ENCODE measurements at regions of chr6 and their contacts with region 1.

Region 1: GRCh38 chr6:55276745-55277530 is 50.3 kb upstream of the GFRAL start:
- DNase-seq: peak; percentile 6 to 43 (median 10)
- ATAC-seq: no peak
- H3K4me3 ChIP-seq: no peak overlapping the region
- H3K27ac ChIP-seq: no peak overlapping the region
- H3K4me1 ChIP-seq: no peaks in the 10 kb centered on the region
- H3K27me3 ChIP-seq: no peaks in the 10 kb centered on the region
- CTCF ChIP-seq: peak in 2 of 3 experiments; percentile 32 to 38; a peak in 2 of 6 replicates
- EP300 ChIP-seq: no peak
- POLR2A ChIP-seq: no peak
- RAD21 ChIP-seq: peak; percentile 51 to 56

Region 2: DNA sequence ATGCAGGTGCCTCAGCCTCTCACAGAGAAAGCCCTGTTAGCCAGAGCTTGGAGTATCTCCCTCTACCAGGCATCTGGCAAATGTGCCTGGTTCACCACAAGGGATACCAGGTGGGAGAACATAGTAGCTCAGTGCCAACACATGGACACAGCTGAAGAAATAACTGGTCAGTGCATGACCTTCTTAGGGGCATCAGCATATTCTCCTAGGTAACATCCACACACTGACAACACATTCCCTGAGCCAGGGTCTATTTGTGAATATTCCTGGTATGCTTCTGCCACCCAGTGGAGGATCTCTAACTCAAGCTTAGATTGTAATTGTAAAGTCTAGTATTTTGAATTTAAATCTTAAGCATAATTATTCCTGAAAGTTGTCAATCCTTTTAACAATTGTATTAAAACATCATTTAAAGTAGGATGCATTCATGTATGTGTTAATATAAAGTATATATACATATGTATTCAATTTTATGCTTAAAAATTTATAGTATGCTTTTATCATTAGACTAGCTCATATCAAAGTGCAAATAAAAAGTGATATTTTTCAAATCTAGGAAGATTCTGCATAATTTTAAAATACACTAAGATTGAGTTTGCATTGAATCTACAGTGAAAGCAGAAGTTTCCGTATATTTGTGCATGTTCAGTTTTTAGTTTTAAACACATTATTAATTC is 1015.7 kb after region 1 on chr6:
- CTCF ChIA-PET with region 1: interaction called, 3 read pairs
- POLR2A ChIA-PET with region 1: no interaction called
- in situ Hi-C with region 1: no loop called
- intact Hi-C with region 1: loop called (anchors 5 kb)
- DNase-seq: peak in 2 of 4 experiments; percentile 10 to 27
- ATAC-seq: peak; percentile 67
- H3K4me3 ChIP-seq: no peak overlapping the region
- H3K27ac ChIP-seq: no peak overlapping the region
- H3K4me1 ChIP-seq: no peaks in the 10 kb centered on the region
- H3K27me3 ChIP-seq: no peaks in the 10 kb centered on the region
- CTCF ChIP-seq: peak in 2 of 3 experiments; percentile 28 to 40; a peak in 2 of 6 replicates
- EP300 ChIP-seq: no peak
- POLR2A ChIP-seq: no peak
- RAD21 ChIP-seq: peak; percentile 57 to 71

Measured in K562 (cell line).